HepG2 (cell line): ENCODE measurements at regions of chr19 and their contacts with region 1.

Region 1: GRCh38 chr19:55117636-55118391 is at the start of gene PPP1R12C:
- DNase-seq: peak; percentile 97
- ATAC-seq: peak; percentile 92
- H3K4me3 ChIP-seq: peak within 1 kb of the TSS; percentile 86 to 99 (median 98)
- H3K27ac ChIP-seq: peak within 1 kb of the TSS; percentile 47
- H3K4me1 ChIP-seq: peaks cover 43% of the 10 kb centered on the region
- H3K27me3 ChIP-seq: peaks cover 0 to 6% of the 10 kb centered on the region in 2 experiments; a peak in 2 of 5 replicates
- CTCF ChIP-seq: peak; percentile 12; the same call in 1 of the 2 replicates
- EP300 ChIP-seq: peak in 1 of 2 experiments; percentile 53; a peak in 1 of 4 replicates
- POLR2A ChIP-seq: peak; percentile 50 to 76; a peak in 3 of 4 replicates
- RAD21 ChIP-seq: no peak
- total RNA-seq, gene PPP1R12C: 13.0 and 29.7 TPM in 2 replicates

Region 2: DNA sequence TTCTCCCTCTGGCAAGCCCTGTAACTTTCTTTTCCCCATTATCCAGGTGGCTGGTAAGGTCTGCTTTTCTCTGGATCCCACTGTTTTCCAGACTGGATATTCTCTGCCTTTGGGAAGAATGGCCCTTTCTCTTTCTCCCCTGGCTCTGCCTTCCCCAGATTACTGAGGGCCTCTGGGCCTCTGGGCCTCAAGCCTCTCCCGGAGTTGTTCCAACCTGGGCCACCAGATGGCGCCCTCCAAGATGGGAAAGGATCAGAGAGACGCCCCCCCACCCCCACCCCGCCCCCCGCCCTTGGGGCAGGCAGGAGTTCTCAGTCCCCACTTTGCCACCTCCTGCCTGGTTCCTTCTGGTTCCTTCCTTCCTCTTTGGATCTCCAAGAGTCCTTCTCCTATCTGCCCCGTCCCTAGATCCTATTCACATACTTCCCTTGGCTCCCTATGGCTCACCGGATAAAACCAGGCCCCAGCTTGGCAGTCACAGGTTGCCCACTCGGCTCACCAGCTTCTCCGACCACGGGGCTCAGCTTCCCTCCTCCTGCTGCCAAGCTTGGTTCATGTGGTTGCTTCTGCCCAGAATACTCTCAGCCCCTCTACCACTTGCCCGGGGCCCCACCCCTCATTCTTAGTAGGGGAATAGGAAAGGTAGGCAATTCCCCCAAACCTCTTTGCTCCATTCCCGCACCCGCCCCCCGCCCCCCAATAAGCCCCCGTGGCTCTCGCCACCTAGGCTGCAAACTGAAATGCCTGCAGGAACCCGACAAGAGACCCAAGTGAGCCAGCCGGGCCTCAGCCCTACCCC is 29.1 kb before region 1 on chr19:
- CTCF ChIA-PET with region 1: no interaction called
- POLR2A ChIA-PET with region 1: no interaction called
- in situ Hi-C with region 1: loop called (anchors 5 kb)
- intact Hi-C with region 1: no loop called
- DNase-seq: peak; percentile 59
- ATAC-seq: peak; percentile 63
- H3K4me3 ChIP-seq: no peak overlapping the region
- H3K27ac ChIP-seq: no peak overlapping the region
- H3K4me1 ChIP-seq: no peaks in the 10 kb centered on the region
- H3K27me3 ChIP-seq: no peaks in the 10 kb centered on the region
- CTCF ChIP-seq: peak; percentile 62
- EP300 ChIP-seq: no peak
- POLR2A ChIP-seq: no peak
- RAD21 ChIP-seq: no peak